PC-3 (cell line): ENCODE measurements at regions of chr17 and their contacts with region 1.

Region 1: DNA sequence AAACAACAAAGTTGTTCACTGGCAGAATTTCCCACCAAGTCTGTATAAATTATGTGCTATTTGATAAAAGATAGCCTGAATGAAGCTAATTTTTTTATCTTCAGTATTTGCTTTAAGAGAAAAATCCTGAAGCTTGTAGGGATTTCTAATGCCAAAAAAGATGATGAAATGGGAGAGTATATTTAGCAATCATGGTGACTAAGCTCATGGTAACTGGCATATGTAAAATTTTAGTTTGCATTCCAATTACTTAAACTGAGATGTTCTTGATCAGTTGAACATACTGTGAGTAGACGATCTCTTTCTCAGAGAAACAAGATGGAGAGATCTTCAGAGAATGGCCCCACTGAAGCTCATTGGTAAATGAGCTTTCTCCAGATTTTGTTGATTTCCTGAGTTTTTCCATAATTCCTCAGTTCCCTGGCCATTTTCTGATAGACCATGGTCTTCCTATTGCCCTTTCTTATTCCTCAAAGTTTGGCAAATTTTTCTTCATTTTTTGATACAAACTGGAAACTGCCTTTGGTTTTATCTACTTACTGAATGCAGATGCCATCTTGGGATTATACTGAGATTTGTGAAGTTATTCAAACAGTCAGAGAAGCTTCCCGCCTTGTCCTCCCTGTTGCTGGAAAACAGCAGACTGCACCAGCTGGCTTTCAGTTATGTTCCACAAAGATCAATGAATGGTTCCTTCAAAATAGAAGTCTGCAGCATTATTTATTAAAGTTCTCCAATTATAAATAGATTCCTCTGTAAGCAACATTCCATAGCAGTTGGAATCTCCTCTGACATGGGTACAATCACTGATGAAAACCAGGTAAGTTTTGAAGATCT is 68.3 kb upstream of the ALOX12 start:
- DNase-seq: peak; percentile 49
- ATAC-seq: no peak
- H3K4me3 ChIP-seq: no peak overlapping the region
- H3K27ac ChIP-seq: no peak overlapping the region
- H3K4me1 ChIP-seq: no peaks in the 10 kb centered on the region
- H3K27me3 ChIP-seq: no peaks in the 10 kb centered on the region
- CTCF ChIP-seq: no peak

Region 2: DNA sequence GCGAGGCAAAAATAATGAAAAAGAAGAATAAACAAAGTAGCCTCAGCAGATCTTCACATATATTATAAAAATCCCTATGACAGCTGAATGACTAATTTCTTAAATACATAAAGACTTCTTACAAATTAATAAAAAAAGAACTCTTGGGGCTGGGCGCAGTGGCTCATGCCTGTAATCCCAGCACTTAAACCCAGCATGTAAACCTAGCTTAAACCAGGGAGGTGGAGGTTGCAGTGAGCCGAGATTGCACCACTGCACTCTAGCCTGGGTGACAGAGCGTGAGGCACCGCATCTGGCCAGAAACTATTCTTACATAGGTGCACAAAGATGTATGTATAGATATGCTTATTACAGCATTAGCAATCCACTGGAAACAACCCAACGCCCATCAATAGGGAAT is 248.3 kb before region 1 on chr17:
- CTCF ChIA-PET with region 1: no interaction called
- POLR2A ChIA-PET with region 1: interaction called, 13 read pairs
- intact Hi-C with region 1: no loop called
- DNase-seq: peak; percentile 68
- ATAC-seq: peak; percentile 92
- H3K4me3 ChIP-seq: peak overlapping the region; percentile 32; the same call in 1 of the 2 replicates
- H3K27ac ChIP-seq: peak overlapping the region; percentile 70
- H3K4me1 ChIP-seq: peaks cover 19% of the 10 kb centered on the region
- H3K27me3 ChIP-seq: no peaks in the 10 kb centered on the region
- CTCF ChIP-seq: no peak